ENCODE measurements at regions of chr14 and their contacts with region 1.

Region 1: GRCh38 chr14:65847075-65847847 is 434.7 kb downstream of the FUT8 start:
- DNase-seq: peak; percentile 93
- ATAC-seq: peak; percentile 92
- H3K4me3 Mint-ChIP-seq: peak overlapping the region; percentile 60
- H3K27ac Mint-ChIP-seq: peak overlapping the region; percentile 93
- H3K4me1 Mint-ChIP-seq: peaks cover 83% of the 10 kb centered on the region
- H3K27me3 Mint-ChIP-seq: no peaks in the 10 kb centered on the region

Region 2: GRCh38 chr14:65832431-65833266 is 14.6 kb before region 1 on chr14:
- CTCF ChIA-PET with region 1: interaction called, 16 read pairs
- POLR2A ChIA-PET with region 1: interaction called, 4 read pairs
- DNase-seq: no peak
- ATAC-seq: no peak
- H3K4me3 Mint-ChIP-seq: no peak overlapping the region
- H3K27ac Mint-ChIP-seq: peak overlapping the region; percentile 58
- H3K4me1 Mint-ChIP-seq: peaks cover 46% of the 10 kb centered on the region
- H3K27me3 Mint-ChIP-seq: no peaks in the 10 kb centered on the region

Region 3: GRCh38 chr14:65860956-65861611 is 13.8 kb after region 1 on chr14:
- CTCF ChIA-PET with region 1: interaction called, 19 read pairs
- POLR2A ChIA-PET with region 1: interaction called, 17 read pairs
- DNase-seq: peak; percentile 84
- ATAC-seq: peak; percentile 89
- H3K4me3 Mint-ChIP-seq: peak overlapping the region; percentile 59
- H3K27ac Mint-ChIP-seq: peak overlapping the region; percentile 88
- H3K4me1 Mint-ChIP-seq: peaks cover 69% of the 10 kb centered on the region
- H3K27me3 Mint-ChIP-seq: no peaks in the 10 kb centered on the region

Region 4: GRCh38 chr14:65879248-65880009 is 32.2 kb after region 1 on chr14:
- CTCF ChIA-PET with region 1: interaction called, 16 read pairs
- POLR2A ChIA-PET with region 1: interaction called, 13 read pairs
- DNase-seq: no peak
- ATAC-seq: peak; percentile 37
- H3K4me3 Mint-ChIP-seq: no peak overlapping the region
- H3K27ac Mint-ChIP-seq: peak overlapping the region; percentile 83
- H3K4me1 Mint-ChIP-seq: peaks cover 9% of the 10 kb centered on the region
- H3K27me3 Mint-ChIP-seq: no peaks in the 10 kb centered on the region

Region 5: GRCh38 chr14:65927931-65928356 is 80.7 kb after region 1 on chr14:
- CTCF ChIA-PET with region 1: interaction called, 17 read pairs
- POLR2A ChIA-PET with region 1: interaction called, 32 read pairs
- DNase-seq: peak; percentile 91
- ATAC-seq: peak; percentile 94
- H3K4me3 Mint-ChIP-seq: peak overlapping the region; percentile 55
- H3K27ac Mint-ChIP-seq: peak overlapping the region; percentile 92
- H3K4me1 Mint-ChIP-seq: peaks cover 79% of the 10 kb centered on the region
- H3K27me3 Mint-ChIP-seq: no peaks in the 10 kb centered on the region

Region 6: DNA sequence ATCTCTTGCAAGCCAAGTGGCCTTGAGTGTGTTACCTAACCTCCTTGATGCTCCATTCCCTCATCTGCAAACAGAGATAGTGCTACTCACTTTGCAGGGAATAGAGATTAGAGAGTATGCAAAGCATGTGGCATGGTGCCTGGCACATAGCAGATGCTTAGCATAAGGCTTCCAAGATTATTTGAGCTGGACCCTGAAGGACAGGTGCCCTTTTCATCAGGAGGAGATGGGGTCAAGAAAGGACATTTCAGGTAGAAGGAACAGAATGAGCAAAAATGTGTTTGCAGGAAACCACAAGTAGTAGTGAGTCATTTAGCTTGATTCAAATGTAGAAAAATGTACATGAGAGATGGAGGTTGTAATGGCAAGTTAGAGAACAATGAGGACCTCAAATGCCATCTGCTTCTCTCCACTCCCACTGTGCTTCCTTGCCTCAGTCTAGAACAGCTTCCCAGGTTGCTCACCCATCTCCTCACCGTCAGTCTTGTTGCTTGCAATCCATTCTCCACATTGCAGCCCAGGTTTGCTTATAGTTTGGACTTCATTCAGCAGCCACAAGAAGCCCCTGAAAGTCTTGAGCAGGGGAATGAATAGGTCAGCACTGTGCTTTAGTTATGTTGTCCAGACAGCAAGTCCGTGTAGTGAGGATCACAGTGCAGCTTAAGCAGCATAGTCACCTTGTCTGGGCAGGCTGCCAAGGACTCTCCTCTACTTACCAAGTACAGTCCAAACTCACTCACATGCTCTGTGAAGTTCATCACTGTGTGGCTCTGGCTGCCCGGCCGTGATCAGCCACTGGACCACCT is 102.7 kb after region 1 on chr14:
- CTCF ChIA-PET with region 1: interaction called, 12 read pairs
- POLR2A ChIA-PET with region 1: interaction called, 10 read pairs
- DNase-seq: peak; percentile 31
- ATAC-seq: peak; percentile 73
- H3K4me3 Mint-ChIP-seq: no peak overlapping the region
- H3K27ac Mint-ChIP-seq: peak overlapping the region; percentile 79
- H3K4me1 Mint-ChIP-seq: peaks cover 37% of the 10 kb centered on the region
- H3K27me3 Mint-ChIP-seq: peaks cover 2% of the 10 kb centered on the region

Region 7: GRCh38 chr14:66503532-66503931 is 656.3 kb after region 1 on chr14:
- CTCF ChIA-PET with region 1: no interaction called
- POLR2A ChIA-PET with region 1: no interaction called
- DNase-seq: no peak
- ATAC-seq: no peak
- H3K4me3 Mint-ChIP-seq: no peak overlapping the region
- H3K27ac Mint-ChIP-seq: no peak overlapping the region
- H3K4me1 Mint-ChIP-seq: peaks cover 19% of the 10 kb centered on the region
- H3K27me3 Mint-ChIP-seq: no peaks in the 10 kb centered on the region

Measured in activated CD8-positive, alpha-beta T cell treated with anti-CD3 and anti-CD28 coated beads, Interleukin-2, amount 10 ng/mL, durations not matched to agents 7 days and 5 days (primary cell).